CD4-positive, alpha-beta memory T cell (primary cell): ENCODE measurements at regions of chr21 and their contacts with region 1.

Region 1: GRCh38 chr21:16330082-16330907 is 600.5 kb downstream of the USP25 start:
- DNase-seq: peak in 4 of 5 donors; percentile 15 to 24 (median 17)
- H3K4me3 ChIP-seq: no peak overlapping the region
- H3K4me3 Mint-ChIP-seq: no peak overlapping the region
- H3K27ac ChIP-seq: no peak overlapping the region
- H3K27ac Mint-ChIP-seq: no peak overlapping the region
- H3K4me1 ChIP-seq: no peaks in the 10 kb centered on the region
- H3K4me1 Mint-ChIP-seq: peaks cover 0 to 2% (median 0%) of the 10 kb centered on the region in 4 donors
- H3K27me3 ChIP-seq: no peaks in the 10 kb centered on the region
- H3K27me3 Mint-ChIP-seq: no peaks in the 10 kb centered on the region

Region 2: DNA sequence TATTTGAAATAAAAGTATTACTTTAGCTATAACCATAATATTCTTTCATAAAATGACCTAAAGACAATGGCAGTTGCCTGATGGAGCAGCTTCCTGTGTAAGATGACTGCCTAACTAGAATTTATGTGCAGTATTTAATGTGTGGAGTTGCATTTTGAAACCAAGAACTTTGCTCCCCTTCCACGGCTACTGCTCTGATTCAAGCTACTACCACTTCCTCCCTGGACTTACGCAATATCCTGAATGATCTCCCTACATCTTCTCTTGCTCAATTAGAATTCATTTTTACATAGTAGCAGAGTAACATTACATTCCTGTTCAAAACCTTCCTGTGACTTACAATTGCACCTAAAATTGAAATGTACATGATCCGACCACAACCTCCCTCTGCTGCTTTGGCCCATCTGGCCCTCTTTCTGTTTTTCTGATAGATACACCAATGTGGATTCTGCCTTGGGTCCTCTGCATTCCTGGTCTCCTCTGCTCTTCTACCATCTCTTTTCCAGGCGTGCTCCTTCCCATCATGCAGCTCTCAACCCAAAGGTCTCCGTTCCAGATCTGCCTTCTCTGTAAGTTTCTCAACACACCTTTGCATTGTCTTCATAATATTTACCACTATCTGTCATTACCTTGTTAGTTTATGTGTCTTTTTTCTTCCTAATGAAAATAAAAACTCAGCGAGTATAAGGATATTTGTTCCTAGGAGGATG is 648.0 kb before region 1 on chr21:
- CTCF ChIA-PET with region 1: no interaction called
- POLR2A ChIA-PET with region 1: no interaction called
- intact Hi-C with region 1: loop called (anchors 5 kb)
- DNase-seq: peak in 1 of 5 donors; percentile 8
- H3K4me3 ChIP-seq: no peak overlapping the region
- H3K4me3 Mint-ChIP-seq: no peak overlapping the region
- H3K27ac ChIP-seq: no peak overlapping the region
- H3K27ac Mint-ChIP-seq: peak overlapping the region in 1 of 7 donors; percentile 17
- H3K4me1 ChIP-seq: no peaks in the 10 kb centered on the region
- H3K4me1 Mint-ChIP-seq: peaks cover 5 to 6% (median 6%) of the 10 kb centered on the region in 4 donors
- H3K27me3 ChIP-seq: no peaks in the 10 kb centered on the region
- H3K27me3 Mint-ChIP-seq: peaks cover 2 to 3% of the 10 kb centered on the region in 2 donors

Region 3: GRCh38 chr21:15894596-15894995 is 435.7 kb before region 1 on chr21:
- CTCF ChIA-PET with region 1: no interaction called
- POLR2A ChIA-PET with region 1: no interaction called
- intact Hi-C with region 1: loop called (anchors 5 kb)
- DNase-seq: no peak
- H3K4me3 ChIP-seq: no peak overlapping the region
- H3K4me3 Mint-ChIP-seq: no peak overlapping the region
- H3K27ac ChIP-seq: no peak overlapping the region
- H3K27ac Mint-ChIP-seq: no peak overlapping the region
- H3K4me1 ChIP-seq: no peaks in the 10 kb centered on the region
- H3K4me1 Mint-ChIP-seq: peaks cover 0 to 2% (median under 1%) of the 10 kb centered on the region in 4 donors
- H3K27me3 ChIP-seq: no peaks in the 10 kb centered on the region
- H3K27me3 Mint-ChIP-seq: peaks cover 0 to 4% of the 10 kb centered on the region in 2 donors

Region 4: DNA sequence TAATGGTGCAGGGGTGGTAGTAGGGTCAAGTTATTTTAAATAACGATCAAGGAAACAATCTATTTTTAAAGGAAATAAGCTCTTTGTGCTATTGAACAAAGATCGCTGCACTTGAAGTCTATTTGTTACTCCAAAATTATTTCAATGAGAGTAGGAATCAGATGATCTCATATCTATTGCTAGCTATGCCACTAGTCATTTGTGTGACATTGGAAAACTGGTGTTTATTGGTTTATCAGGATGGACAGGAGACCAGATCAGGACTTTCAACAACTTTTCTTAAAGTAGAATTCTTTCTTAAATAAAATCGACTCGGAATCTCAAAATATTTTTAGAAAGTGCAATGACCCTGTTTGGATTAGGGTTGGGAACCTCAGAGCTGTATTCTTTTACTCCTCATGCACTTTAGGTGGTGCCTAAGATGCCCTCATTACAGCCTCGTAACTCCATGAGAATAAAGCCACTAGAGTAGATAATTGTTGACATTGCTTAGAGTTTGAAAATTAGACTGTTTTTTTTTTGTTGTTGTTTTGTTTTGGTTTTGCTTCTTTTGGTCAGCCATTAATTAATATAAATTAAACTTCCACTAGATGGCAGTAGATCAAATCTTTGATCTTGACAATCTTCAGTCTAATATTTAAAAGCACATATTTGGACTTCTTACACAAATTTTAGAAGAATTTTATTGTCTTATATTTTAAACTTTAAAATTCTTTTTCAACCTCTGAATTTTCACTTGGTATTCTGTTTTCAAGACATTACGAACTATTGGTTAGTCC is 248.1 kb before region 1 on chr21:
- CTCF ChIA-PET with region 1: no interaction called
- POLR2A ChIA-PET with region 1: no interaction called
- intact Hi-C with region 1: loop called (anchors 5 kb)
- DNase-seq: no peak
- H3K4me3 ChIP-seq: no peak overlapping the region
- H3K4me3 Mint-ChIP-seq: no peak overlapping the region
- H3K27ac ChIP-seq: no peak overlapping the region
- H3K27ac Mint-ChIP-seq: no peak overlapping the region
- H3K4me1 ChIP-seq: no peaks in the 10 kb centered on the region
- H3K4me1 Mint-ChIP-seq: no peaks in the 10 kb centered on the region
- H3K27me3 ChIP-seq: no peaks in the 10 kb centered on the region
- H3K27me3 Mint-ChIP-seq: peaks cover 0 to 1% of the 10 kb centered on the region in 2 donors